Endothelial cell of umbilical vein (primary cell): ENCODE measurements at regions of chr2 and their contacts with region 1.

Region 1: GRCh38 chr2:218516614-218517013 is 51.5 kb downstream of the USP37 start:
- DNase-seq: no peak
- H3K4me3 ChIP-seq: no peak overlapping the region
- H3K27ac ChIP-seq: no peak overlapping the region
- H3K4me1 ChIP-seq: no peaks in the 10 kb centered on the region
- H3K27me3 ChIP-seq: no peaks in the 10 kb centered on the region
- CTCF ChIP-seq: peak; percentile 27 to 38
- POLR2A ChIP-seq: no peak

Region 2: DNA sequence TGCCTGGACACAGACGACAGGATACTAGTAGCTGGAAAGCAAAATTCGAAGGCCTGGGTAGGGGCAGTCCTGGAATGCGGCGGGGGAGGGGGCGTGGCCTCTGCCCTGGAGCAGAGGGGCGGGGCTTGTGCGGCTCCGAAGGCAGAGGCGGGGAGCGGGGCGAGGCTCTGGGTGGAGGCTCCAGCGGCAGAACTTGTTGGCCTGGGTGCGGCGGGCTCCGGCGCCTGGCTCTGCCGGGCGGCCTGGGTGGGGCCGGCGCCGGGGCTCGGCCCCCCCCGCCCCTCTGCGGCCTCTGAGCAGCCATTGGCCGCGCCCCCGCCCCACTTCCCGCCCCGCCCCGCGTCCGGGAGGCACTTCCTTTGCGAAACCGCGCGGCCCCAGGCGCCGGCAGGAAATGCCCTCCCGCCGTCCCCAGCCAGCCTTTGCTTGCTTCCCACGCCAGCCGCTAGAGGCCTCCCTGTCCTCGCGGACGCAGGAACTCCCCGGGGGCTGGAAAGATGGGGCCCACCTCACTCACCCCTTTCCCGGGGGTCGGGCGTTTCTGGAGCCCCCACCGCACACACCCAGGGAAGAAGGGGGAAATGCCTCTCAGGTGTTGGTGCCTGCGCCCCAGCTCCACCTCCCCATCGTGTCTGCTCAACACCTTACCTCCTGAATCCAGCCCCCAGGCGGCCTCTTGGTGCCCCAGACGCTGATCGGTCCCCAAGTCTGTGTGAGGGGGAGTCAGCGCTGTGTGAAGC is 110.2 kb before region 1 on chr2:
- CTCF ChIA-PET with region 1: no interaction called
- POLR2A ChIA-PET with region 1: no interaction called
- dilution Hi-C with region 1: no loop called
- intact Hi-C with region 1: loop called (anchors 1 kb)
- DNase-seq: peak; percentile 94
- H3K4me3 ChIP-seq: peak overlapping the region; percentile 16 to 25 (median 18)
- H3K27ac ChIP-seq: peak overlapping the region; percentile 81
- H3K4me1 ChIP-seq: peaks cover 22% of the 10 kb centered on the region
- H3K27me3 ChIP-seq: no peaks in the 10 kb centered on the region
- CTCF ChIP-seq: peak; percentile 66 to 91
- POLR2A ChIP-seq: peak; percentile 80

Region 3: DNA sequence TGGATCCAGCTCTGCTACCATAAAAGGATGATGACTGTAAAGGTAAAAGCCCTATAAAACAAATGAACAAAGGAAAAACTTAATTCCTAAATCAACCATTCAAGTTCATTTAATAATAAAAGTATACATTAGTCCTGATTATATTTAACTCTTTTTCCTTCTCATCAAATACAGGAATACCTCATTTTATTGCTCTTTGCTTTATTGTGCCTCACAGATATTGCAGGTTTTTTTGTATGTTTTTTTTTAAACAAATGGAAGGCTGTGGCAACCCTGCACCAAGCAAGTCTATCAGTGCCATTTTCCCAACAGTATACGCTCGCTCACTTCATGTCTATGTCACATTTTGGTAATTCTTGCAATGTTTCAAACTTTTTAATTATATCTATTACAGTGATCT is 13.4 kb after region 1 on chr2:
- CTCF ChIA-PET with region 1: interaction called, 17 read pairs
- POLR2A ChIA-PET with region 1: no interaction called
- dilution Hi-C with region 1: no loop called
- intact Hi-C with region 1: no loop called
- DNase-seq: no peak
- H3K4me3 ChIP-seq: no peak overlapping the region
- H3K27ac ChIP-seq: no peak overlapping the region
- H3K4me1 ChIP-seq: no peaks in the 10 kb centered on the region
- H3K27me3 ChIP-seq: no peaks in the 10 kb centered on the region
- CTCF ChIP-seq: no peak
- POLR2A ChIP-seq: no peak